GM12878 (cell line): ENCODE measurements at regions of chr16 and their contacts with region 1.

Region 1: DNA sequence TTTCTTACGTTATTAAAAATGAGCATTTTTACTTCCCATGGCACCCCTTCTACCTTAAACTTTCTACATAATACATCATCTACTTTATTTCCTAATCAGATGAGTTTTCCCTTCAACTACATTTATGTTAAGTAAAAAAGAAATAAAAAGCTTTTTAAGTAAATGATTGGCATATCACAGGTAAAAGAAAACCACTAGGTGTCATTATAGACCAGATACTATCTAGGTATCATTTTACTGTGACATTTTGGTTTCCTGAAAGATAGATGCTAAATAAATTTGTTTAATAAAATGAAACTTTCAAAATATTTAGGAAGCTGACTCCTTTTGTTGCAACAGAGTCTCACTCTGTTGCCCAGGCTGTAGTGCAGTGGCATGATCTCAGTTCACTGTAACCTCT is 3.8 kb upstream of the CMTM1 start:
- DNase-seq: no peak
- ATAC-seq: peak; percentile 19; the same call in 1 of the 3 replicates
- H3K4me3 ChIP-seq: no peak overlapping the region
- H3K27ac ChIP-seq: no peak overlapping the region
- H3K4me1 ChIP-seq: no peaks in the 10 kb centered on the region
- H3K27me3 ChIP-seq: no peaks in the 10 kb centered on the region
- CTCF ChIP-seq: no peak; a peak in 1 of 6 replicates
- EP300 ChIP-seq: no peak
- POLR2A ChIP-seq: no peak
- RAD21 ChIP-seq: peak; percentile 32

Region 2: GRCh38 chr16:66474750-66475199 is 87.6 kb before region 1 on chr16:
- CTCF ChIA-PET with region 1: interaction called, 14 read pairs
- POLR2A ChIA-PET with region 1: no interaction called
- RAD21 ChIA-PET with region 1: interaction called, 4 read pairs
- SMC1A ChIA-PET with region 1: interaction called, 7 read pairs
- in situ Hi-C with region 1: no loop called
- intact Hi-C with region 1: no loop called
- DNase-seq: peak; percentile 9
- ATAC-seq: peak; percentile 90
- H3K4me3 ChIP-seq: no peak overlapping the region
- H3K27ac ChIP-seq: no peak overlapping the region
- H3K4me1 ChIP-seq: no peaks in the 10 kb centered on the region
- H3K27me3 ChIP-seq: peaks cover 0 to 3% of the 10 kb centered on the region in 2 experiments; a peak in 1 of 4 replicates
- CTCF ChIP-seq: no peak
- EP300 ChIP-seq: no peak
- POLR2A ChIP-seq: no peak
- RAD21 ChIP-seq: no peak

Region 3: DNA sequence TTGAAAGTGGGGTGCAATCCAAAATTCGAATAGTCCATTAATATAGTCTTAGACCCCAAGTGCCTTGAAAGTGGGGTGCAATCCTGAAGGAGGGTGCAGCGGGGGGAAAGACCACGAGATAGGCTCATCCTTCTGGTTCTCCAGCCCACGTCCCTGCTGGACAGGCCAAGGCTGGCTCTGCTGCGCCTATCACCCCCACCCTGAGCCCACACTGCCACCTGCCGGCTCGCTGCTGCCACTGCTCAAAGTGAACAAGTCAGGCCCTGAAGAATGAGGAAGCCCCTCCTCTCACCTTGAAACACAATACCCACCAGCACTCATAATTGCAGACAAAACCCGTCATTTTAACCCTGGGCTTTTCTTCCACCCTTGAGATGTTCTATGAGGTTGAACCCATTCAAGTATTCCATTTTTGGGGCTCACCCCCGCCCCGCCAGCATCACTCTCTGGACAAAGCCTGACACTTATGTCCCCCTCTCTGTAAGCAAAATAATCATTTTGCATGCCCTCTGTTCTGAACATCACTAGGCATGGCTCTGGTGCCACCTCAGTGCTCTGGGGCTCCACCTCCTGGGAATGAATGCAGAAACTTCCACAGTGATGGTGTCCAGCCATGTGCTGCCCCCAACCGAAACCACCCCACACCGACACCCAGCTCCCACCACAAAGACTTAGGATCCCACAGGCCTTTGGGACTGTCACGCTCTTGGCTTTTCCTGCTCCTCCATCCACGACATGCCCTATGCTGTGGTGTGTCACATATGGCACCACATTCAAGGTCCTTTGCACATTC is 78.5 kb before region 1 on chr16:
- CTCF ChIA-PET with region 1: interaction called, 5 read pairs
- POLR2A ChIA-PET with region 1: interaction called, 3 read pairs
- RAD21 ChIA-PET with region 1: interaction called, 3 read pairs
- SMC1A ChIA-PET with region 1: interaction called, 11 read pairs
- in situ Hi-C with region 1: no loop called
- intact Hi-C with region 1: no loop called
- DNase-seq: no peak
- ATAC-seq: peak; percentile 88
- H3K4me3 ChIP-seq: no peak overlapping the region
- H3K27ac ChIP-seq: no peak overlapping the region
- H3K4me1 ChIP-seq: peaks cover 5% of the 10 kb centered on the region
- H3K27me3 ChIP-seq: no peaks in the 10 kb centered on the region
- CTCF ChIP-seq: peak; percentile 96 to 99 (median 98)
- EP300 ChIP-seq: no peak
- POLR2A ChIP-seq: no peak
- RAD21 ChIP-seq: peak; percentile 90

Region 4: DNA sequence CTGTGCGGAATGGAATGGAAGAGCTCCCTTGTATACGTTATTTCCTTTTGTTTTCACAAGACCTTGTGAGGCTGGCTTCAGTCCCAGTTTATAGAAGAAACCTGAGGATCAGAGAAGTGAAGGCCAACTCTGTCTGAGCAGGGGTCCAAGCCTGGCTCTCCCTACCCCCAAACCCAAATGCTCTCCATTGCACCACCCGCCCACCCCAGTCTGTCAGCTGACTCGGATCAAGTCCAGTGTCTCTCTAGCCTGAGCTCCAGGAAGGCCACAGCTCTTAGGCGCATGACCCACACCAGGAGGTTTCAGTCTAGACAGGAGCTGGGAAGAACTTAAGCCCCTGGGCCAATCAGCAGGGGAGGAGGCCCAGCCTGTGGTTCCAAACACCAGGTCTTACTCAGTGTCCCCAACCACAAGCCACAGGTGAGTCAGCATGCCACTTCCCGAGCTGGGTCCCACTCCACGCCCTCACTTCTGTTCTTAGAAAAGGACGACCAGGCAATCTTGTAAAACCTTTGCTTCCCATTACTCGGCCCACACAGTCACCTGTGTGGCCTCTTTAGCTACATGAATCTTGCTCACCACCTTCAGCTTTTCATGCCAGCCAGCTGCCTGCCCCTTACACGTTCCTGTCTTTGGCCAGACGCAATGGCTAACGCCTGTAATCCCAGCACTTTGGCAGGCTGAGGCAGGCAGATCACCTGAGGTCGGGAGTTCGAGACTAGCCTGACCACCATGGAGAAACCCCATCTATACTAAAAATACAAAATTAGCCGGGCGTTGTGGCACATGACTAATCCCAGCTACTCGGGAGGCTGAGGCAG is 40.2 kb before region 1 on chr16:
- CTCF ChIA-PET with region 1: interaction called, 5 read pairs
- POLR2A ChIA-PET with region 1: interaction called, 4 read pairs
- RAD21 ChIA-PET with region 1: interaction called, 13 read pairs
- SMC1A ChIA-PET with region 1: interaction called, 19 read pairs
- in situ Hi-C with region 1: no loop called
- intact Hi-C with region 1: no loop called
- DNase-seq: peak; percentile 86
- ATAC-seq: peak; percentile 72
- H3K4me3 ChIP-seq: no peak overlapping the region
- H3K27ac ChIP-seq: peak overlapping the region; percentile 9; the same call in 1 of the 2 replicates
- H3K4me1 ChIP-seq: peaks cover 69% of the 10 kb centered on the region
- H3K27me3 ChIP-seq: no peaks in the 10 kb centered on the region
- CTCF ChIP-seq: no peak
- EP300 ChIP-seq: peak; percentile 66 to 89
- POLR2A ChIP-seq: no peak
- RAD21 ChIP-seq: no peak

Region 5: GRCh38 chr16:66580605-66581209 is 18.3 kb after region 1 on chr16:
- CTCF ChIA-PET with region 1: interaction called, 31 read pairs
- POLR2A ChIA-PET with region 1: no interaction called
- RAD21 ChIA-PET with region 1: interaction called, 7 read pairs
- SMC1A ChIA-PET with region 1: interaction called, 25 read pairs
- in situ Hi-C with region 1: no loop called
- intact Hi-C with region 1: no loop called
- DNase-seq: no peak
- ATAC-seq: no peak
- H3K4me3 ChIP-seq: no peak overlapping the region
- H3K27ac ChIP-seq: no peak overlapping the region
- H3K4me1 ChIP-seq: peaks cover 3% of the 10 kb centered on the region; the same call in 1 of the 2 replicates
- H3K27me3 ChIP-seq: peaks cover 7 to 10% of the 10 kb centered on the region in 2 experiments; a peak in 3 of 4 replicates
- CTCF ChIP-seq: no peak
- EP300 ChIP-seq: no peak
- POLR2A ChIP-seq: no peak
- RAD21 ChIP-seq: no peak